ENCODE measurements at regions of chr15 and their contacts with region 1.

Region 1: GRCh38 chr15:45457641-45458433 is 64.7 kb downstream of the SLC30A4 start:
- DNase-seq: peak; percentile 78
- ATAC-seq: peak; percentile 84

Region 2: DNA sequence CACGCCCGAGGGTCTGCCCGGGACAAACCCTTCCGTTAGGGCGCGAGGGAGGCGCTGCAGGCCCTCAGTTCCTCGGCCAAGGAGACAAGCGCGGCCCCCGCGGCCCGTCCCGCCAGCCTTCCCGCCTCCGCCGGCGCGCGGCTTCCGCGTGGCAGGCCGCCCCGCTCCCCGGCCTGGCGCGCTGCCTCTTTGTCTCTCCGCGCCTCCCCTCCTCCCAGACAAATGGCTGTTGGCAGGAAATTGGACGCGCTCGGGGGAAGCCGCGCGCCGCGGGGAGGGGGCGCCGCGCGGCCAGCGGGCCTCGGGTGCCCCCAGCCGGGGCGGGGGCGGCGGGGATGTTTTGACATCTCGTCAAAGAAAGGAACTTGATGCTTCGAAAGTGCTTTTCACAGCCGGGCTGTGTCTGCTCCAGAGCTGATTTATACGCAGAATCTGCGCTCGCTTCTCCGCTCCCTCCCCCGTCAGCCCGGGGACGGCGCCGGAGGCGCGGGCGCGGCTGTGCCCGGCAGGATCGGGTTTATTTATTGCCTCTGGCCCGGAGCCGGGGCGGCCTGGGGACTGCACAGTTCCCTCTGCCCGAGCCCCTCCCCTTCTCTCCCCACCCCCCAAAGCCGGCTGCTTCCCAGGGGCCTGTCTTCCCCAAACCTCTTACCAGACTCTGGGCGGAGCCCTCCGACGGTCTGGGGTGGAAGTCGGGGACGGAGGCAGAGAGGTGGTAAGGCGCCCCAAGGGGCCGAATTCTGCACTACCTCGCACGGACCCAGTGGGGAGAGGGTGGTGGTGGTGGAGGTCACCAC is 290.8 kb before region 1 on chr15:
- intact Hi-C with region 1: loop called (anchors 10 kb)
- DNase-seq: peak; percentile 95
- ATAC-seq: peak; percentile 85

Region 3: GRCh38 chr15:45287390-45287956 is 170.4 kb before region 1 on chr15:
- intact Hi-C with region 1: no loop called
- DNase-seq: no peak
- ATAC-seq: no peak

Region 4: GRCh38 chr15:45307230-45307924 is 150.5 kb before region 1 on chr15:
- intact Hi-C with region 1: loop called (anchors 5 kb)
- DNase-seq: no peak
- ATAC-seq: no peak

Region 5: DNA sequence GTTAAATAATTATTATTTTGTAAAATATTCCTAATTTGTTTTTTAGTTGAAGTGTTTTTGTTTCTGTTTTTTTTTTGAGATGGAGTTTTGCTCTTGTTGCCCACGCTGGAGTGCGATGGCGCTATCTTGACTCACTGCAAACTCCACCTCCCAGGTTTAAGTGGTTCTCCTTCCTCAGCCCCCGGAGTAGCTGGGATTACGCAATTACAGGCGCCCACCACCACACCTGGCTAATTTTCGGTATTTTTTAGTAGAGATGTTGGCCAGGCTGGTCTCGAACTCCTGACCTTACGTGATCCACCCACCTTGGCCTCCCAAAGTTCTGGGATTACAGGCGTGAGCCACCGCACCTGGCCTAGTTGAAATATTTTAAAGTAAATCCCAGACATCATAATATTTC is 30.8 kb before region 1 on chr15:
- intact Hi-C with region 1: loop called (anchors 1 kb)
- DNase-seq: no peak
- ATAC-seq: no peak

Region 6: DNA sequence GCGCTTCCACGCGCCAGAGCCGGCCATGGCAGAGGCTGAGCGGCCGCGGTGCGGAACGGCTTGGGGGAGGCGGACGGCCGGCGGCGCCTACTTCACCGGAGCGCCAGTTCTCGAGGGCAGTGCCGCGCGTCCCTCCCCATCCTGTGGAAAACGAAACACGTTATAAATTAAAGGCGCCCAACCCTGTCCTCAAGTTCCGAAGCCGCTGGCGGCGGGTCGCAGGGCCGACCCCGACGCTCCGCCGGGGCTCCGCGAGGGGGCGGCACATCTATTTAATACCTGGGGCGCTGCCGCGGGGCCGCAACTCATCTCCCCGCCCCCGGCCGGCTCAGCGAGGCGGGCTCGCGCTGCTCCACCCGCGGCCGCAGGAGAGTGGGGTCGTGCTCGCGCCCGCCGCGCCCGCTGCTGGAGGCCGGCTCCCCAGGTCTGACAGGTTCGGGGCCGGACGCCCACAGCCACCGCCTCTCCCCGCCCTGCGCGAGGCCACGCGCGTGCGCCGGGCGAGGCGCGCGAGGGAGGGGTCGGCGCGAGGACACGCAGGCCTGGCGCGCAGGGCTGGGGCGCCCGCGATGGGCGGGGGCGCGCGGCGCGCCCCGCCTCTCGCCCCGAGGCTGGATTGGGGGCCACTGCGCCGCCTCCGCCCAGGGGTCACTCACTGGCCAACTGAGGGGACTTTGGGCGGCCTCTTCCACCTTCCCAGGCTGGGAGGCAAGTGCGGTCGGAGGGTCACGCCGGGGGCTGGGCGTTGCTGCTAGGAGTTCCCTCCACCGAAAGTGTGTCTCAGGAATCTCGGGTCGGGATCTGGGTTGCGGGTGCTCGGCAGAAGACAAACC is 64.7 kb after region 1 on chr15 and contains the start of gene SLC30A4:
- intact Hi-C with region 1: loop called (anchors 2 kb)
- DNase-seq: peak; percentile 85
- ATAC-seq: peak; percentile 98
- total RNA-seq, gene SLC30A4: 4.0 TPM

Region 7: DNA sequence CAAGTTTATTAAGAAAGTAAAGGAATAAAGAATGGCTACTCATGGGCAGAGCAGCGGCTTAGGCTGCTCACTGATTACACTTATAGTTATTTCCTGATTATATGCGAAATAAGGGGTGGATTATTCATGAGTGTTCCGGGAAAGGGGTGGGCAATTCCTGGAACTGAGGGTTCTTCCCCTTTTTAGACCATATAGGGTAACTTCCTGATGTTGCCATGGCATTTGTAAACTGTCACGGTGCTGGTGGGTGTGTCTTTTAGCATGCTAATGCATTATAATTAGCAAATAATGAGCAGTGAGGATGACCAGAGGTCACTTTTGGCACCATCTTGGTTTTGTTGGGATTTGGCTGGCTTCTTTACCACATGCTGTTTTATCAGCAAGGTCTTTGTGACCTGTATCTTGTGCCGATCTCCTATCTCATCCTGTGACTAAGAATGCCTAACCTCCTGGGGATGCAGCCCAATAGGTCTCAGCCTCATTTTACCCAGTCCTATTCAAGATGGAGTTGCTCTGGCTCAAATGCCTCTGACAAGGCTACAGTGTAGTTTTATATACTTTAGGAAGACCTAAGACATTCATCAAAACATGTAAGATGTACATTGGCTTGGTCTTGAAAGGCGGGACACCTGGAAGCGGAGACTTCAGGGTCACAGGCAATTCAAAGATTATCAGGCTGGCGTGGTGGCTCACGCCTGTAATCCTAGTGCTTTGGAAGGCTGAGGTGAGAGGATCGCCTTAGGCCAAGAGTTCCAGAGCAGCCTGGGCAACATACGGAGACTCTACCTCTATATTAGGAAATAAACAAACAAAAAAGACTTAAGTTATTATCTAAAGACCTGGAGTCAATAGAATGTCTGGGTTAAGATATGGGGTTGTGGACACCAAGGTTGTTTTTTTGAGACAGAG is 126.1 kb after region 1 on chr15:
- intact Hi-C with region 1: no loop called
- DNase-seq: no peak
- ATAC-seq: no peak

Region 8: GRCh38 chr15:45611305-45611704 is 153.5 kb after region 1 on chr15:
- intact Hi-C with region 1: loop called (anchors 1 kb)
- DNase-seq: no peak
- ATAC-seq: no peak

Region 9: GRCh38 chr15:45630917-45631691 is 173.3 kb after region 1 on chr15:
- intact Hi-C with region 1: no loop called
- DNase-seq: no peak
- ATAC-seq: no peak

Region 10: DNA sequence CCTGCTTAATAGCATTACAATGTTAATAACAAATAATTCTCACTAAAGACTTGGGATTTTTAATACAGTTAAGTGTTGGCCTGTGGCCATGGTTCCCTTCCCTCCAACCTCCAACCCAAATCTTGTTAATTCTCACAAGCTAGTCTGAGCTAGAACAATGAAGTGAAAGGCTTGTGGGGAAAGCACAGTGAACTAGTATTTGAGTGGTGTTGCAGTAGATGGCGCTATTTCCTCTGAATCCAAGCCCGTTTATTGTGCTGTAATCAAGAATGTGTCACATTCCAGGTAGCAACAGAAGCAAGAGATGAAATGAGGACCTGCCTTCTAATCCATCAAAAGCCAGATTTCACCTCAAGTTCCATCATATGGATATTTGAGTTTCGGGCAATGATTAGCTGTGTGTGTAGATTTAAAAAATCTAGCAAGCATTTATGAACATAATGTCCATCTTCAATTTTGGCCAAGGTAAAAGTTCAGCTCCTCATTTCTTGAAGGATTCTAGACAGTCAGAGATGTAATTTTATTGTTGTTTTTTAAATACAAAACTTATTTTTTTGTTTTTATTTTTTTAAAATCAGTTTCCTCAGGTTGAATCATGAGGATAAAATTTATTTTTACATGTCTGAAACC is 337.7 kb after region 1 on chr15:
- intact Hi-C with region 1: no loop called
- DNase-seq: no peak
- ATAC-seq: no peak

Measured in Right ventricle myocardium inferior (tissue), 1 donor.